ENCODE measurements at regions of chr7 and their contacts with region 1.

Region 1: GRCh38 chr7:35839860-35840854 is 39.3 kb downstream of the SEPTIN7 start:
- DNase-seq: no peak
- ATAC-seq: no peak
- H3K4me3 ChIP-seq: no peak overlapping the region
- H3K4me3 Mint-ChIP-seq: peak overlapping the region in 2 of 10 donors; percentile 9 to 13
- H3K27ac ChIP-seq: no peak overlapping the region
- H3K27ac Mint-ChIP-seq: peak overlapping the region in 1 of 9 donors; percentile 56
- H3K4me1 ChIP-seq: no peaks in the 10 kb centered on the region
- H3K4me1 Mint-ChIP-seq: peaks cover 9 to 66% (median 58%) of the 10 kb centered on the region in 7 donors
- H3K27me3 ChIP-seq: no peaks in the 10 kb centered on the region
- H3K27me3 Mint-ChIP-seq: no peaks in the 10 kb centered on the region

Region 2: DNA sequence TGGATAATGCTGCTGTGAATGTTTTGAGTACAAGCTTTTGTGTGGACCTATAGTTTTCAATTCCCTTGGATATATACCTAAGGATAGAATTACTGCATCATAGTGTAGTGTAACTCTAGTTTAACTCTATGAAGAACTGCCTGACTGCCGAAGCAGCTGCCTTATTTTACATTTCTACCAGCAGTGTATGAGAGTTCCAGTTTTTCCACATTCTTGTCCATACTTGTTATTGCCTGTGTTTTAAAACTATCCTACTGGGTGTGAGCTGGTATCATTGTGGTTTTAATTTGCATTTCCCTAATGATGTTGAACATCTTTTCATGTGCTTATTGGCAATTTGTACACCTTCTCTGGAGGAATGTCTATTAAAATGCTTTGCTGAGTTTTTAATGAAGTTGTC is 23.6 kb before region 1 on chr7:
- CTCF ChIA-PET with region 1: interaction called, 6 read pairs
- POLR2A ChIA-PET with region 1: no interaction called
- intact Hi-C with region 1: loop called in 1 of 2 experiments (anchors 2 kb)
- DNase-seq: no peak
- ATAC-seq: no peak
- H3K4me3 ChIP-seq: no peak overlapping the region
- H3K4me3 Mint-ChIP-seq: peak overlapping the region in 3 of 10 donors; percentile 41 to 52 (median 48)
- H3K27ac ChIP-seq: no peak overlapping the region
- H3K27ac Mint-ChIP-seq: peak overlapping the region in 1 of 9 donors; percentile 48
- H3K4me1 ChIP-seq: no peaks in the 10 kb centered on the region
- H3K4me1 Mint-ChIP-seq: peaks cover 49 to 94% (median 90%) of the 10 kb centered on the region in 7 donors
- H3K27me3 ChIP-seq: no peaks in the 10 kb centered on the region
- H3K27me3 Mint-ChIP-seq: no peaks in the 10 kb centered on the region

Region 3: GRCh38 chr7:35854311-35854710 is 14.2 kb after region 1 on chr7:
- CTCF ChIA-PET with region 1: no interaction called
- POLR2A ChIA-PET with region 1: no interaction called
- intact Hi-C with region 1: loop called in 1 of 2 experiments (anchors 1 kb)
- DNase-seq: no peak
- ATAC-seq: no peak
- H3K4me3 ChIP-seq: no peak overlapping the region
- H3K4me3 Mint-ChIP-seq: peak overlapping the region in 2 of 10 donors; percentile 5 to 23
- H3K27ac ChIP-seq: no peak overlapping the region
- H3K27ac Mint-ChIP-seq: peak overlapping the region in 1 of 9 donors; percentile 22
- H3K4me1 ChIP-seq: peaks cover 0 to 1% of the 10 kb centered on the region in 2 donors
- H3K4me1 Mint-ChIP-seq: peaks cover 28 to 89% (median 70%) of the 10 kb centered on the region in 7 donors
- H3K27me3 ChIP-seq: no peaks in the 10 kb centered on the region
- H3K27me3 Mint-ChIP-seq: no peaks in the 10 kb centered on the region

Measured in naive thymus-derived CD4-positive, alpha-beta T cell (primary cell).